B cell (primary cell): ENCODE measurements at regions of chr10 and their contacts with region 1.

Region 1: GRCh38 chr10:73439605-73440312 is 6.4 kb upstream of the MSS51 start:
- DNase-seq: no peak
- ATAC-seq: no peak
- H3K4me3 ChIP-seq: no peak overlapping the region
- H3K4me3 Mint-ChIP-seq: no peak overlapping the region
- H3K27ac ChIP-seq: no peak overlapping the region
- H3K27ac Mint-ChIP-seq: no peak overlapping the region
- H3K4me1 ChIP-seq: no peaks in the 10 kb centered on the region
- H3K4me1 Mint-ChIP-seq: no peaks in the 10 kb centered on the region
- H3K27me3 ChIP-seq: no peaks in the 10 kb centered on the region
- H3K27me3 Mint-ChIP-seq: no peaks in the 10 kb centered on the region
- CTCF ChIP-seq: no peak

Region 2: GRCh38 chr10:72344932-72345331 is 1094.8 kb before region 1 on chr10:
- CTCF ChIA-PET with region 1: no interaction called
- POLR2A ChIA-PET with region 1: interaction called, 11 read pairs
- intact Hi-C with region 1: no loop called
- DNase-seq: peak; percentile 34
- ATAC-seq: no peak
- H3K4me3 ChIP-seq: no peak overlapping the region
- H3K4me3 Mint-ChIP-seq: no peak overlapping the region
- H3K27ac ChIP-seq: peak overlapping the region in 1 of 2 donors; percentile 18
- H3K27ac Mint-ChIP-seq: no peak overlapping the region
- H3K4me1 ChIP-seq: peaks cover 9 to 17% of the 10 kb centered on the region in 2 donors
- H3K4me1 Mint-ChIP-seq: peaks cover 18% of the 10 kb centered on the region
- H3K27me3 ChIP-seq: no peaks in the 10 kb centered on the region
- H3K27me3 Mint-ChIP-seq: no peaks in the 10 kb centered on the region
- CTCF ChIP-seq: no peak

Region 3: GRCh38 chr10:72509206-72509799 is 930.5 kb before region 1 on chr10:
- CTCF ChIA-PET with region 1: no interaction called
- POLR2A ChIA-PET with region 1: no interaction called
- intact Hi-C with region 1: no loop called
- DNase-seq: no peak
- ATAC-seq: no peak
- H3K4me3 ChIP-seq: no peak overlapping the region
- H3K4me3 Mint-ChIP-seq: no peak overlapping the region
- H3K27ac ChIP-seq: no peak overlapping the region
- H3K27ac Mint-ChIP-seq: no peak overlapping the region
- H3K4me1 ChIP-seq: no peaks in the 10 kb centered on the region
- H3K4me1 Mint-ChIP-seq: peaks cover 4% of the 10 kb centered on the region
- H3K27me3 ChIP-seq: no peaks in the 10 kb centered on the region
- H3K27me3 Mint-ChIP-seq: no peaks in the 10 kb centered on the region
- CTCF ChIP-seq: no peak

Region 4: GRCh38 chr10:73060738-73061635 is 378.8 kb before region 1 on chr10:
- CTCF ChIA-PET with region 1: no interaction called
- POLR2A ChIA-PET with region 1: no interaction called
- intact Hi-C with region 1: no loop called
- DNase-seq: peak; percentile 49
- ATAC-seq: no peak
- H3K4me3 ChIP-seq: no peak overlapping the region
- H3K4me3 Mint-ChIP-seq: no peak overlapping the region
- H3K27ac ChIP-seq: no peak overlapping the region
- H3K27ac Mint-ChIP-seq: no peak overlapping the region
- H3K4me1 ChIP-seq: no peaks in the 10 kb centered on the region
- H3K4me1 Mint-ChIP-seq: peaks cover 7% of the 10 kb centered on the region
- H3K27me3 ChIP-seq: no peaks in the 10 kb centered on the region
- H3K27me3 Mint-ChIP-seq: no peaks in the 10 kb centered on the region
- CTCF ChIP-seq: peak; percentile 67

Region 5: GRCh38 chr10:73424516-73424915 is 15.2 kb before region 1 on chr10:
- CTCF ChIA-PET with region 1: no interaction called
- POLR2A ChIA-PET with region 1: no interaction called
- intact Hi-C with region 1: no loop called
- DNase-seq: no peak
- ATAC-seq: no peak
- H3K4me3 ChIP-seq: no peak overlapping the region
- H3K4me3 Mint-ChIP-seq: no peak overlapping the region
- H3K27ac ChIP-seq: no peak overlapping the region
- H3K27ac Mint-ChIP-seq: no peak overlapping the region
- H3K4me1 ChIP-seq: peaks cover 12 to 13% of the 10 kb centered on the region in 2 donors
- H3K4me1 Mint-ChIP-seq: peaks cover 12% of the 10 kb centered on the region
- H3K27me3 ChIP-seq: no peaks in the 10 kb centered on the region
- H3K27me3 Mint-ChIP-seq: no peaks in the 10 kb centered on the region
- CTCF ChIP-seq: no peak